ENCODE measurements at regions of chr19 and their contacts with region 1.

Region 1: DNA sequence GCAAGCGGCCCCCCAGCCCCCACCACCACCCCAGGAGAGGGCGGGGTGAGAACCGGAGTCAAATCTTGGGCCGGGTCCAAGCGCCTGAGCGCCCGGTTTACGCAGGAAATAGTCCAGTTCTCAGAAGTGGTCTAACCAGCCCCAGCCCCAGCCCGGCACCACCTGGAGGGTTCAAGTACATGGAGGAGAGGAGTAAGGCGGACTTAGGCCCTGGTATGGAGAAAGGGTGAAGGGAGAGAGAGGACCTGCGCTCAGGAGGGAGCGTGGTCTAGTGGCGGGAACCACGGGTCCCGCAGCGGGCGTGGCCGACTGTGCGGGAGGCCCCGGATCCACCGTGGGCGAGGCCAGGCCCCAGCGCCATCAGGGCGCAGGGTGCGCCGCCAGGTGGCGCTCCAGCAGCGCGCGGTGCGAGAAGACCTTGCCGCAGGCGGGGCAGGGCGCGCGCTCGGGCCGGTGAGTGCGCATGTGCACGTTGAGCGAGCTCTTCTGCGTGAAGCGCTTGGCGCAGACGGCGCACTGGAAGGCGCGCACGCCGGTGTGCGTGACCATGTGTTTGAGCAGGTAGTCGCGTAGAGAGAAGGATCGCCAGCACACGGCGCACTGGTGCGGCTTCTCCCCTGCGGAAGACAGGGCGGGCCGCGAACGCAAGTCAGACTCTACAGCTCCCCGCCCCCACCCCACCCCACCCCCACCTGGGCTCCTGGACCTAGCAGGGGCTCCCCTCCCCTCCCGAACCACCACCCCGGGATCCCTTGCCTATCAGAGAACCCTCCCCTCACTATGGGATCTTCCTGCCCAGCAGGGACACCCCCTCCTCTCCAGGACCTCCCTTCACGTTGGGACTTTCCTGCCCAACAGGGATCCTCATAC is 2.1 kb upstream of the SLC27A5 start:
- DNase-seq: peak; percentile 96
- CTCF ChIP-seq: peak; percentile 98

Region 2: GRCh38 chr19:57903618-57904184 is 610.2 kb before region 1 on chr19:
- CTCF ChIA-PET with region 1: no interaction called
- POLR2A ChIA-PET with region 1: no interaction called
- DNase-seq: no peak
- CTCF ChIP-seq: no peak

Region 3: DNA sequence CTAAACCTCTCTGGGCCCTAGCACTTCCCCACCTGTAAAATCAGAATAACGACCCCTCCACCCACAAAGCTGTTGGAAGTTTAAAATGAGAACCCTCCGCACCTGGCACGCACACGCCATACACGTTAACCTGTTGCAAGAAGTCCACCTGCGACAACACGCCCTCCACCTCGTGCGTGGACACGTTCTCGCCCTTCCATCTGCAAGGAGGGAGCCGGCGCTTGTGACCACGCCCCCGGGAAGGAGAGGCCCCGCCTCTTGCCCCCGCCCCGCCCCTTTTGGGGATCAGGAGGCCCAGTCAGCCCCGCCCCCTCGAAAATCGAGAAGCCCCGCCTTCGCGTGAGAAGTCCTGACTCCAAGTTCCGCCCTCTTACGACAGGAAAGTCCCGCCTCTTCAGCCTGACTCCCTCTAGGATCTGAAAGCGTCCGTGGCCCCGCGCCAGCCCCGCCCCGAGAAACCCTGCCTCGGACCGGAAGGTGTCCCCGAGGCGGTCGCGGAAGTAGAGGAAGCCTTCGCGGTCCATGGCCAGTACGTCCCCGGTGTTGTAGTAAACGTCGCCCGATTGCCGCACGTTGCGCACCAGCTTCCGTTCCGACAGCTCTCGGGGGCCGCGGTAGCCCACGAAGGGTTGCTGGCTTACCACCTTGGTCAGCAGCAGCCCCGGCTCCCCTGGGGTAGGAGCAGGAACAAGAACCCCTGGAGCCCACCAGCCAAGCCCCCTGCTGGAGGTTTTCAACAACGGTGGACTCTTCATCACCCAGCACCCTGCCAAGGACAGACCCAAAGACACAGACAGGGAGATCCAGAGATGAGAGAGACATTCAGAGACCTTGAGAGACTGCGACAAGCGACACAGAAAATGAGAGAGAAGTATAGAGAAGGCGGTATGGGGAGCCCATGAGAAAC is 14.7 kb before region 1 on chr19:
- CTCF ChIA-PET with region 1: interaction called, 39 read pairs
- POLR2A ChIA-PET with region 1: interaction called, 3 read pairs
- DNase-seq: peak; percentile 100
- CTCF ChIP-seq: no peak

Region 4: DNA sequence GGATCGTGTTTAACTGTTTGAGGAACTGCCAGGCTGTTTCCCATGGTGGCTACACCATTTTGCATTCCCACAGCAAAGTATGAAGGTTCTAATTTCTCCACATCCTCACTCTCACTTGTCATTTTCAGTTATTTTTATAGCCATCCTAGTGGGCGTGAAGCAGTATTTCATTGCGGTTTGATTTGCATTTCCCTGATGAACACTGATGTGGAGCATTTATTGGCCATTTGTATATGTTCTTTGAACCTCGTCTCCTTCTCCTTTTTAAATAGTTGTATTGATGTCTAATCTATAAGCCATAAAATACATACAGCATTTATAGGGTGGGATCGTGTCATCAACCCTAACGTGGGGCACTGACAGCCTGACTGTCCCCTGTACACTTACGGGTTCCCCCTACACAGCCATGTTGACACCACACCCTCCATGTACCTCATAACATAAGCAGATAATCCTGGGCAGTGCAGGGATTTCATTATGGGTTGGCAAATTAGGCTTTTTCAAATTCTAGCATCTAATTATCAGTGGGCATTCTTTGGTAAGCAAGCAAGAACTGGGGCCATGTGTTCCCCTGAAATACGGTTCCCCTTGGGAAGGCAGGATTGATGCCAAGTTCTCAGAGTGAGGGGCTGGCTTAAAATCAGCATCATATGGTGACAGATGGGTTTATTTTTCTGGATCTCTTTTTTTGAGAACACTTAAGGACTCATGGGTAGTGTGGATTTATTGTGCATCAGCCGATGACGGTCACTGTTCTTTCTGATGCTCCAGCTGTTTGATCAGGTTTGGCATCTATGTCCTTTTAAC is 17.3 kb after region 1 on chr19:
- CTCF ChIA-PET with region 1: interaction called, 30 read pairs
- POLR2A ChIA-PET with region 1: no interaction called
- DNase-seq: no peak
- CTCF ChIP-seq: no peak

Region 5: DNA sequence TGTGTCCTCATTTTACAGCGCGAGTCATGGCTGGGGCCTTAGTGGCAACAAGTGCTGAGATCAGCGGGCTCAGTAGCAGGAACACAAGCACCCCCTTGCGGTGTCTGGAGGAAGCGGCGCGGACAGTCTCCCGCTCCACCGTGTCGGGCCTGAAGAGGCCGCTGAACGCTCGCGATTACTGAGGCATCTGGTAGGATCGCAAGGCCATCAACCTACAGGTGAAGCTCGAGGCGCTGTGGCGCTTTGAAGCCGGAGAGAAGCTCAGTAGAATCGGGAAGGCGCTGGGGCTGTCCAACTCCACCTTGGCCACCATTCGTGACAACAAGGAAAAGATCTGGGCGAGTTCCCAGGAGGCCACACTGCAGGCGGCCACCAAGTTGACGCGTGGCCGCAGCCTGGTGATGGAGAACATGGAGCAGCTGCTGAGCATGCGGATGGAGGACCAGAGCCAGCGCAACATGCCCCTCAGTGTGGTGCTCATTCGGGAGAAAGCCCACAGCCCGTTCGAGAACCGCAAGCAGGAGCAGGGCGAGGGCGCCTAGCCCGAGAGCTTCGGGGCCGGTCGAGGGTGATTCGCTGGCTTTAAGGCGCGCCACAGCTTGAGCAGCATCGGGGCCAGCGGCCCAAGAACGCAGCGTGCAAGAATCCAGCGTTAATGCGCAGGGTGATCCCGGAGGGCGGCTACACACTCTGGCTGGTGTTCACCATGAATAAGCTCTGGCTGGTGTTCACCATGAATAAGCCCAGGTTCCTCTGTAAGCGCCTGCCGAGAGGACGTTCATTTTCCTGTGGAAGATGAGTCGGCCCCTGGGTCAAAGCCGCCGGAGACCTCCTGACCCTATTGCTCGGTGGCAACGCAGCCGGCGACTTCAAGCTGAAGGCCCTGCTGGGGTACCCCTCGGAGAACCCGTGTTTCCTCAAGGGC is 67.6 kb after region 1 on chr19:
- CTCF ChIA-PET with region 1: interaction called, 60 read pairs
- POLR2A ChIA-PET with region 1: interaction called, 4 read pairs
- DNase-seq: peak; percentile 90
- CTCF ChIP-seq: peak; percentile 100

Measured in GM10248 (cell line).